ENCODE measurements at regions of chr10 and their contacts with region 1.

Region 1: GRCh38 chr10:63976538-63976937 is 455.3 kb downstream of the REEP3 start:
- DNase-seq: peak in 4 of 10 donors; percentile 25 to 77 (median 44)

Region 2: DNA sequence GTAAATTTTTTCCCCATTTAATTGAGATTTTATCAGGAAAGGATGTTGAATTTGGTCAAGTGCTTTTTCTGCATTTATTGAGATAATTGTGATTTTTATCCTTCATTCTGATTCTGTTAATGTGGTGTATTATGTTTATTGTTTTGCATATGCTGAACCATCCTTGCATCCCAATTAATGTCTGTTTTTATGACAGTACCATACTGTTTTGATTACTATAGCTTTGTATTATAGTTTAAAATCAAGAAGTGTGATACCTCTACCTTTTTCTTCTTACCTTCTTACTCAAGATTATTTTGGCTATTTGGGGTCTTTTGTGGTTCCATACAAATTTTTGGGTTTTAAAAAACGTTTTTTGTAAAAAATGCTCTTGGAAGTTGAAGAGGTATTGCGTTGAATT is 98.1 kb before region 1 on chr10:
- intact Hi-C with region 1: loop called (anchors 2 kb)
- DNase-seq: no peak

Measured in posterior cingulate gyrus (tissue), 11 donors.